ENCODE measurements at regions of chr12 and their contacts with region 1.

Region 1: GRCh38 chr12:103647267-103647666 is 60.2 kb downstream of the STAB2 start:
- DNase-seq: no peak
- H3K4me3 ChIP-seq: no peak overlapping the region
- H3K27ac ChIP-seq: no peak overlapping the region
- H3K4me1 ChIP-seq: no peaks in the 10 kb centered on the region
- H3K27me3 ChIP-seq: no peaks in the 10 kb centered on the region
- CTCF ChIP-seq: no peak
- POLR2A ChIP-seq: no peak

Region 2: GRCh38 chr12:103422746-103423515 is 224.3 kb before region 1 on chr12:
- intact Hi-C with region 1: no loop called
- DNase-seq: no peak
- H3K4me3 ChIP-seq: no peak overlapping the region
- H3K27ac ChIP-seq: no peak overlapping the region
- H3K4me1 ChIP-seq: no peaks in the 10 kb centered on the region
- H3K27me3 ChIP-seq: no peaks in the 10 kb centered on the region
- CTCF ChIP-seq: no peak
- POLR2A ChIP-seq: no peak

Region 3: GRCh38 chr12:103623716-103624115 is 23.6 kb before region 1 on chr12:
- intact Hi-C with region 1: loop called (anchors 2 kb)
- DNase-seq: no peak
- H3K4me3 ChIP-seq: no peak overlapping the region
- H3K27ac ChIP-seq: no peak overlapping the region
- H3K4me1 ChIP-seq: no peaks in the 10 kb centered on the region
- H3K27me3 ChIP-seq: no peaks in the 10 kb centered on the region
- CTCF ChIP-seq: no peak
- POLR2A ChIP-seq: no peak

Region 4: GRCh38 chr12:104108755-104109445 is 461.6 kb after region 1 on chr12:
- intact Hi-C with region 1: no loop called
- DNase-seq: peak; percentile 69 to 76
- H3K4me3 ChIP-seq: no peak overlapping the region
- H3K27ac ChIP-seq: no peak overlapping the region
- H3K4me1 ChIP-seq: no peaks in the 10 kb centered on the region
- H3K27me3 ChIP-seq: no peaks in the 10 kb centered on the region
- CTCF ChIP-seq: peak; percentile 74 to 77 (median 77)
- POLR2A ChIP-seq: no peak